ENCODE measurements at regions of chr13 and their contacts with region 1.

Region 1: GRCh38 chr13:24727731-24728601 is 36.0 kb upstream of the RNF17 start:
- DNase-seq: peak in 2 of 3 donors; percentile 48 to 68
- ATAC-seq: peak; percentile 99 to 100 (median 100)
- H3K4me3 ChIP-seq: no peak overlapping the region
- H3K27ac ChIP-seq: no peak overlapping the region
- H3K4me1 ChIP-seq: no peaks in the 10 kb centered on the region
- H3K27me3 ChIP-seq: no peaks in the 10 kb centered on the region
- CTCF ChIP-seq: peak; percentile 71 to 83 (median 78)
- POLR2A ChIP-seq: no peak

Region 2: DNA sequence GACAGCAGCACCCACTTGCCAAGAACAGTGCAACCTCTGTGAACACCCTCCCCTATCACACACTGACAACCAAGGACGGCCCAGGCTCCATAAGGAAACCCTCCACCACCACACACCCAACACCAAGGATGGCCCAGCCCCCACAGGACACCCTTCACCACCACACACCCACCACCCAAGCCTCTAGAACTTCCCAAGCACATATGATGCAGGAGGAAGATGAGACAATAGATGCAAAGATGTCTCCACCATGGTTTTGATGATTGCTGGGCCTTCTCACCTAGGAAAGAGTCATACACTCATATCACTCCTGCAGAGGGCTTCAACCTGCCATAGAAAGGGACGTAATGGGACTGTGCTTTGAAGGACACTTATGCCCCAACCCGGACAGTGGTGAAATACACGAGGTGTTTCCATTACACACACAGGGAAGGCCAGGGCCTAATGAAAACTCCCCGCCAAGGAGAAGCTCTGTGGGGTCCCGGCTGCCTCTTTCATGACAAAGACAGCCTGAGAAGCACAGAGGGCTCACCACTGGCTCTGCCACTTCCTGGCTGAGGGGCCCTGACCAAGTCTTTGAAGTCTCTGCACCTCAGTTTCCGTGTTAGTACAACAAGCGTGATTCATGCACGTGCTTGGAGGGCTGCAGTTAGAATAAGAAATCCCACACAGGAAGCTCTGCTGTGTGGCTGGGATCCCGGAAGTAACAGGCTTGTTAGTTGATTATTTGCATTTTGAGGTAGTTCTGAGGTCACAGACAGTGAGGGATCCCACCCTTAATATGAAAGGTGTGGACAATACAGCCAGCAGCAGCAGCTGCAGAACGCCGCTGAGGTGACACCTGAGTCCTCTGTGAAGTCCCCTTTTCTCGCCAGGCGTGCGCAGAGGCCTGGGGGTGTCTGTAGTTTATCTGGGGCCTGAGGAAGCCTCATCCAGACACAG is 109.7 kb before region 1 on chr13:
- intact Hi-C with region 1: loop called in 1 of 2 experiments (anchors 10 kb)
- DNase-seq: no peak
- ATAC-seq: peak; percentile 32 to 53 (median 46)
- H3K4me3 ChIP-seq: no peak overlapping the region
- H3K27ac ChIP-seq: no peak overlapping the region
- H3K4me1 ChIP-seq: no peaks in the 10 kb centered on the region
- H3K27me3 ChIP-seq: no peaks in the 10 kb centered on the region
- CTCF ChIP-seq: no peak
- POLR2A ChIP-seq: no peak

Measured in right lobe of liver (tissue), 6 donors.